Panc1 (cell line): ENCODE measurements at regions of chr1 and their contacts with region 1.

Region 1: DNA sequence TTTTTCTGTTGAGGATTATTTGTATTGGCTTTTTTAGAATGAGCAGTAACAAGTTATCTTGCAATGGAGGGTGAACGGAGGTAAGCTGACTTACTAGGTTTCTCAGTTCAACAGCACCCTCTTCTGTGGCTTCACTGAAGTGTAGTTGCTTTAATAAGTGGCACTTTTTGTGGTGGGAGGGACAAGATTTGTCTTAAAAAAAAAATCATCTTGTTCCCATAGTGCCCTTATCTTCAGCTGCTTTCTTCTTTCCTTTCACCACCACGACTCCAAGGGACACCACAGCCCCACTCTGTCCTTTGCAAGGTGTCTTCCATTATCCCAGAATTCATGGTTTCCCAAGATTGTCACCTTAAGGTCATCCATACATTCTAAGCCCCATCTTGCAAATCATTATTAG is 92.9 kb downstream of the PIGK start:
- DNase-seq: peak; percentile 47
- ATAC-seq: 0 out of 2 replicates have a peak, but pooled peaks have one; percentile 68
- H3K4me3 ChIP-seq: no peak overlapping the region
- H3K27ac ChIP-seq: no peak overlapping the region
- H3K4me1 ChIP-seq: no peaks in the 10 kb centered on the region
- H3K27me3 ChIP-seq: no peaks in the 10 kb centered on the region
- CTCF ChIP-seq: peak; percentile 65

Region 2: GRCh38 chr1:76154206-76154956 is 971.9 kb before region 1 on chr1:
- CTCF ChIA-PET with region 1: no interaction called
- POLR2A ChIA-PET with region 1: no interaction called
- in situ Hi-C with region 1: no loop called
- intact Hi-C with region 1: loop called (anchors 5 kb)
- DNase-seq: peak; percentile 64
- ATAC-seq: peak; percentile 98
- H3K4me3 ChIP-seq: peak overlapping the region; percentile 41 to 59
- H3K27ac ChIP-seq: no peak overlapping the region
- H3K4me1 ChIP-seq: no peaks in the 10 kb centered on the region
- H3K27me3 ChIP-seq: peaks cover 6% of the 10 kb centered on the region; the same call in 1 of the 2 replicates
- CTCF ChIP-seq: peak; percentile 93

Region 3: DNA sequence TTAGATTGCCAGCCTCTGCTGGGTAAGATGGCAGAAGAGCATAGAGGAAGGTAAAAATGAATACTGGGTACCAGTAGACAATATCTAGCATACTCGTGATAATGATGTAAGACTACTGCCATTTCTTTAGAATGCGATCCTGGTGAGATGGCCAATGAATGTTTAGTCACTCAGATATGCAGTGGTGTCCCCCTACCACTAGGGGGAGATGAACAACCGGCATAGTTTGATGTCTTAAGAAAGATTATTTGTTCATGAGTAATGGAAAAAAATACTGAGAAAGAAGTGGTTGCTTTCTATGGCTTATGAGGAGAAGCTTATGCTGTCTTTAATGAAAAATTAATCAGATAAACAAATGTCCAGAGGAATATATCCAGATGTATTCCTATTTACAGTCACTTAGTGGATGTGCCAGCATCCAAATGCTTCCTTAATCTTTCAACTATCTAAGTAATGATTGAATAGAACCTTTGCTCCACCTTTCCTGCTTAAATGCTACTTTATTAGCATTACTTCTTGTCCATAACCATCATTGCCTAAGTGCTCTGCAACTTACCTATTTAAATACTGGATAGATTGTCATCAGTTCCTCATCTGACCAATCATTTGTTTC is 795.2 kb before region 1 on chr1:
- CTCF ChIA-PET with region 1: no interaction called
- POLR2A ChIA-PET with region 1: no interaction called
- in situ Hi-C with region 1: no loop called
- intact Hi-C with region 1: loop called (anchors 10 kb)
- DNase-seq: peak; percentile 32
- ATAC-seq: peak; percentile 69
- H3K4me3 ChIP-seq: no peak overlapping the region
- H3K27ac ChIP-seq: no peak overlapping the region
- H3K4me1 ChIP-seq: no peaks in the 10 kb centered on the region
- H3K27me3 ChIP-seq: no peaks in the 10 kb centered on the region
- CTCF ChIP-seq: peak; percentile 83

Region 4: DNA sequence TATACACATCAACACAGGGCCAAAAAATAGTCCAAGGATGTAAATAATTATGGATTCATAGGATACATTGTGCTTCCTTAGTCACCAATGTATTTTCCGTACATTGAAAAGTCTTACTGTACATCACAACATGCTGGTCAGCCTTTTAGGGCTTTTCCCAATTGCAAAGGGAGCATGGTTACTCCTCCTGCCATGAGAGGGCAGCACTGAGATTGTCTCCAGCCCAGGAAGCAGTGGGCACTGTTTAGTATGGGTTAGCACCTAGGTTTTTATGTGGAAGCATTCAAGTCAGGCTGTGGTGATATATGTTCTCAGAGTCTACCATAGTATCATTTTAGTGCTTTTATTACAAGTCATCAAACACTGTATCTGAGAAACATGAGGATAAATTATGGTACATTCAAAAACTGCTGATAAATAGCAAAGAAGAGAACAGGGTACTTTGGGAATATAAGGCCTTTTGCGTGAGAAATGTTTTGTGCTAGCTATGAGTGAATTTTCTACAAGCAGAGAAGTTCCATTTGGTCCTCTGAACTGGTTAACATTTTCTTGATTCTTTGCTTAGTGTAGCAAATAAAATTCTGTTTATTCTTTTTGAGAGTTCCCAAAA is 225.0 kb before region 1 on chr1:
- CTCF ChIA-PET with region 1: no interaction called
- POLR2A ChIA-PET with region 1: no interaction called
- in situ Hi-C with region 1: no loop called
- intact Hi-C with region 1: loop called (anchors 10 kb)
- DNase-seq: peak; percentile 36
- ATAC-seq: no peak
- H3K4me3 ChIP-seq: no peak overlapping the region
- H3K27ac ChIP-seq: no peak overlapping the region
- H3K4me1 ChIP-seq: no peaks in the 10 kb centered on the region
- H3K27me3 ChIP-seq: no peaks in the 10 kb centered on the region
- CTCF ChIP-seq: peak; percentile 75